ENCODE measurements at regions of chr9 and their contacts with region 1.

Region 1: DNA sequence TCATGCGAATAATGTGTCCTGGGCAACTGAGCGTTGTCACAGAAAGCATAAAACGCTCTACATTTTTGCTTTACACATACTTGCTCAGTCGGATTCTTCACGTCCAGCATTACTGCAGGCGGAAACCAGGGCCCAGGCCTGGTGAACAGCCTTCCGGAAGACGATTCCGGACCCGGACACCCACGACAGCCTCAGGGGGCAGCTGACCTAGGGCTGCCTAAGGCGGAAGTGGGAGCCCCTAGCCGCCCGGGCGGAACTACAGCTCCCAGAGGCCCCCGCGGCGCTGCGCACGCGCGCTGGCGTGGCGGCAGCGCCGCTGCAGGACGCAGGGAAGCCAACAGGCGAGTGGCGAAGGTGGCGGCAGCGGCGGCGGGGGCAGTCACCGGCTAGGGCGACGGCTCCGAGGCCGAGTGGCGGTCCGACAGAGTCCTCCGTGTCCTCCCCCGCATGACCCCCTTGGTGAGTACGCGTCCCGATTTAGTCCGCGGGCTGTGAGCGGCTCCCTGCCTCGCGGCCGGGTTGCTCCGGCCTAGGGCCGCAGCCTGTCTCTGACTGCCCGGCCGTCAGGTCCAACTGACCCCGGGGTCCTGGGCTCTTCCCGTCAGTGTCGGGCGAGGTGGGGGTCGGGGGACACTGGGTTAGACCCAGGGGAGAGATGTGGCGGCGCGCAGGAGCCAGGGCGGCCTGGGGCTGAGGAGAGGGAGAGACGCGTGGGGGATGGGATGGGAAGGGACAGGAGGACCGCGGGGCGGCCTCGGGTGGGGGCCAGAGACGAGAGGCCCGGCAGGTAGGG is at the start of gene GAPVD1:
- DNase-seq: peak; percentile 56 to 94 (median 88)

Region 2: GRCh38 chr9:125308683-125309082 is 47.0 kb after region 1 on chr9:
- intact Hi-C with region 1: no loop called
- DNase-seq: no peak

Region 3: GRCh38 chr9:125374443-125375309 is 113.0 kb after region 1 on chr9:
- intact Hi-C with region 1: loop called (anchors 10 kb)
- DNase-seq: peak; percentile 52 to 90 (median 76)

Measured in head of caudate nucleus (tissue), 42 donors.